Caco-2 (cell line): ENCODE measurements at regions of chr14 and their contacts with region 1.

Region 1: GRCh38 chr14:87049950-87050349 is 943.0 kb downstream of the GALC start:
- DNase-seq: peak; percentile 70 to 74
- H3K4me3 ChIP-seq: no peak overlapping the region
- H3K4me3 Mint-ChIP-seq: no peak overlapping the region
- H3K27ac Mint-ChIP-seq: no peak overlapping the region
- H3K4me1 ChIP-seq: no peaks in the 10 kb centered on the region
- H3K4me1 Mint-ChIP-seq: no peaks in the 10 kb centered on the region
- H3K27me3 ChIP-seq: no peaks in the 10 kb centered on the region
- H3K27me3 Mint-ChIP-seq: peaks cover 8% of the 10 kb centered on the region
- CTCF ChIP-seq: peak; percentile 48 to 82

Region 2: DNA sequence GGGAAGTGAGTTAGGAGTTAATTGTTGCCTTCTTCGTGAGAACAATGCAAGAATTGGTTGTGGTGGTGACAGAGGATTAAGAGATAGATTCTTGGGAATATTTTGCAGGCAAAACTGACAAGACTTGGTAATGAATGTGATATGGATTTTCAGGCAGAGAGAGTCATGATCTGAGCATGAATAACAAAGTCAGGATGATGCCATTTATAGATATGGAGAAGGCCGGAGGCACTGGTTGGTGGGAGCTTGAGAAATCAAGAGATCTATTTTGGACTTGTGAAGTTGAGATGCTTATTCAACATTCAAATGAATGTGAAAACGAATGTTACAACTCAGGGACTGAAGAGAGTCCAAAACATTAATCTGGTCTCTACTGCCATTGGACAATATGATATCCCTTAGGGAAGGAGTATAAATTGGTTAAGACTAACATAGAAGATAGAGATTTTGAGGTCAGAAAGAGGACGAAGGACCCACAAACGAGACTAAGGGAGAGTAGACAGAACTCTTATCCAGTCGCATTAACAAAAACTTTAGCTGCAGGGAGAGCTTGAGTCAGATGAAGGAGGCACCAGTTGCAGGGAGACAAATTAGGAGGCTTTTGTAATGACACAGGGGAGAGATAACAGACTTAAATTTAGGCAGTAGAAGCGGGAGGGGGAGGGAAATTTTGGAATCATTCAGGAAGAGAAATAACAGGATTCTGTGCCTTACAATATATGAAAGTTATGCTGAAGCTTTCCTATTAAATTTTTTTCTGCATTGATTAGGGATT is 147.6 kb before region 1 on chr14:
- CTCF ChIA-PET with region 1: no interaction called
- POLR2A ChIA-PET with region 1: no interaction called
- intact Hi-C with region 1: loop called (anchors 5 kb)
- DNase-seq: no peak
- H3K4me3 ChIP-seq: no peak overlapping the region
- H3K4me3 Mint-ChIP-seq: no peak overlapping the region
- H3K27ac Mint-ChIP-seq: no peak overlapping the region
- H3K4me1 ChIP-seq: no peaks in the 10 kb centered on the region
- H3K4me1 Mint-ChIP-seq: no peaks in the 10 kb centered on the region
- H3K27me3 ChIP-seq: no peaks in the 10 kb centered on the region
- H3K27me3 Mint-ChIP-seq: no peaks in the 10 kb centered on the region
- CTCF ChIP-seq: no peak

Region 3: DNA sequence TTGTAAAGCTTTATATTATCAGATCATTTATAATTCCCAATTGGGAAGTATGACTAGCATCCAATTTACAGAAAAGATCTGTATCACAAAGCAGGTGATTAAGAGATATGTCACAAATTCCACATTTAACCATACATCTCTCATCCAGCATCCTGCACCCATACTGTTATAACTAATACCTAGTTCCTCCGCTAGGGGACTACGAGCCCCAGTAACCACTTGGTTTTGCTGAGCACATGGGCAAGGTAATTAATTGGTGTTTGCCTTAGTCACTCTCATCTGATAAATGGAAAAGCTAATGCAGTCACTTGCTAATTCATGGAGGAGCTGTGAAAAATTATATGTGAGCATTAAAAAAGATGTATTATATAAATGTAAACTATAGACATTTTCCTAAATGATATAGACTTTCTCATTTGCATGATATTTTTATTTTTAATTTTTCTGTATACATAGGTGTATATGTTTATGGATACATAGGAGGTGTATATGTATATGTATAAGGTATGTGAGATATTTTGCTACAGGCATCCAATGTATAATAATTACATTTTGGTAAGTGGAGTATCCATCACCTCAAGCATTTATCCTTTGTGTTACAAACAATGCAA is 88.7 kb before region 1 on chr14:
- CTCF ChIA-PET with region 1: interaction called, 7 read pairs
- POLR2A ChIA-PET with region 1: no interaction called
- intact Hi-C with region 1: loop called (anchors 1 kb)
- DNase-seq: peak in 1 of 2 experiments; percentile 53
- H3K4me3 ChIP-seq: no peak overlapping the region
- H3K4me3 Mint-ChIP-seq: no peak overlapping the region
- H3K27ac Mint-ChIP-seq: no peak overlapping the region
- H3K4me1 ChIP-seq: no peaks in the 10 kb centered on the region
- H3K4me1 Mint-ChIP-seq: no peaks in the 10 kb centered on the region
- H3K27me3 ChIP-seq: no peaks in the 10 kb centered on the region
- H3K27me3 Mint-ChIP-seq: peaks cover 10% of the 10 kb centered on the region
- CTCF ChIP-seq: peak; percentile 71 to 72

Region 4: GRCh38 chr14:87014854-87015253 is 35.1 kb before region 1 on chr14:
- CTCF ChIA-PET with region 1: no interaction called
- POLR2A ChIA-PET with region 1: no interaction called
- intact Hi-C with region 1: loop called (anchors 2 kb)
- DNase-seq: no peak
- H3K4me3 ChIP-seq: no peak overlapping the region
- H3K4me3 Mint-ChIP-seq: no peak overlapping the region
- H3K27ac Mint-ChIP-seq: no peak overlapping the region
- H3K4me1 ChIP-seq: peaks cover 6% of the 10 kb centered on the region
- H3K4me1 Mint-ChIP-seq: no peaks in the 10 kb centered on the region
- H3K27me3 ChIP-seq: no peaks in the 10 kb centered on the region
- H3K27me3 Mint-ChIP-seq: no peaks in the 10 kb centered on the region
- CTCF ChIP-seq: peak in 1 of 2 experiments; percentile 17

Region 5: GRCh38 chr14:87615822-87616679 is 566.1 kb after region 1 on chr14:
- CTCF ChIA-PET with region 1: no interaction called
- POLR2A ChIA-PET with region 1: no interaction called
- intact Hi-C with region 1: loop called (anchors 1 kb)
- DNase-seq: peak; percentile 62 to 69
- H3K4me3 ChIP-seq: no peak overlapping the region
- H3K4me3 Mint-ChIP-seq: no peak overlapping the region
- H3K27ac Mint-ChIP-seq: no peak overlapping the region
- H3K4me1 ChIP-seq: no peaks in the 10 kb centered on the region
- H3K4me1 Mint-ChIP-seq: no peaks in the 10 kb centered on the region
- H3K27me3 ChIP-seq: no peaks in the 10 kb centered on the region
- H3K27me3 Mint-ChIP-seq: peaks cover 2% of the 10 kb centered on the region
- CTCF ChIP-seq: peak; percentile 72 to 73